PC-3 (cell line): ENCODE measurements at regions of chr11 and their contacts with region 1.

Region 1: DNA sequence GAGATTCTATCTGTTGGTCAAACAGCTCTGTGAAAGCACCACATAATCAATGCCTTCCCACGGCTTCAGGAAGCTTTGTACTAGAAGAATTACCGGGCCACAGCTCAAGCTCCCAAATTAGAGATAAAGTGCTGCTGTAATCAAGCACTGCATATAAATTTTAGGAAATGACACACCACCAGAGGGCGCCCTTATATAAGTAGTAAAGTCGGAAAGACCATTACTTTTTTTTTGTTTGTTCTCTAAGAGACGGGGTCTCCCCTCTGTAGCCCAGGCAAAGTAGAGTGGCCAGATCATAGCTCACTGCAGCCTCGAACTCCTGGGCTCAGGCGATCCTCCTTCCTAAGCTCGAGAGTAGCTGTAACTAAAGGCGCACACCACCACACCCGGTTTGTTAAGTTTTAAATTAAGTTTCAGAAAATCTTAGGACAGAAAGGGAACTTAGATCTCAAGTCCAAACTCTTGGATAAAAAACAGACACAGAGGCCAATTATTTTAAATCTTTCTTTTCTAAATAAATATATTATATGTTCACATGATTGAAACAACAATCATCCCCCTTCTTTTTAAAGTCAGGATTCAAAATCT is 32.6 kb downstream of the PRCP start:
- DNase-seq: peak; percentile 92
- ATAC-seq: peak; percentile 31
- H3K4me3 ChIP-seq: peak overlapping the region; percentile 40; the same call in 1 of the 2 replicates
- H3K27ac ChIP-seq: no peak overlapping the region
- H3K4me1 ChIP-seq: peaks cover 11% of the 10 kb centered on the region
- H3K27me3 ChIP-seq: no peaks in the 10 kb centered on the region
- CTCF ChIP-seq: peak; percentile 95

Region 2: GRCh38 chr11:82682003-82682751 is 185.4 kb before region 1 on chr11:
- CTCF ChIA-PET with region 1: no interaction called
- POLR2A ChIA-PET with region 1: no interaction called
- intact Hi-C with region 1: loop called (anchors 1 kb)
- DNase-seq: peak; percentile 92
- ATAC-seq: peak; percentile 89
- H3K4me3 ChIP-seq: peak overlapping the region; percentile 42; the same call in 1 of the 2 replicates
- H3K27ac ChIP-seq: peak overlapping the region; percentile 25; the same call in 1 of the 2 replicates
- H3K4me1 ChIP-seq: peaks cover 26% of the 10 kb centered on the region
- H3K27me3 ChIP-seq: peaks cover 12% of the 10 kb centered on the region; the same call in 1 of the 2 replicates
- CTCF ChIP-seq: peak; percentile 90

Region 3: GRCh38 chr11:82775736-82776346 is 91.7 kb before region 1 on chr11:
- CTCF ChIA-PET with region 1: no interaction called
- POLR2A ChIA-PET with region 1: no interaction called
- intact Hi-C with region 1: loop called (anchors 1 kb)
- DNase-seq: peak; percentile 89
- ATAC-seq: peak; percentile 96
- H3K4me3 ChIP-seq: no peak overlapping the region
- H3K27ac ChIP-seq: no peak overlapping the region
- H3K4me1 ChIP-seq: peaks cover 13% of the 10 kb centered on the region; the same call in 1 of the 2 replicates
- H3K27me3 ChIP-seq: no peaks in the 10 kb centered on the region
- CTCF ChIP-seq: peak; percentile 93

Region 4: DNA sequence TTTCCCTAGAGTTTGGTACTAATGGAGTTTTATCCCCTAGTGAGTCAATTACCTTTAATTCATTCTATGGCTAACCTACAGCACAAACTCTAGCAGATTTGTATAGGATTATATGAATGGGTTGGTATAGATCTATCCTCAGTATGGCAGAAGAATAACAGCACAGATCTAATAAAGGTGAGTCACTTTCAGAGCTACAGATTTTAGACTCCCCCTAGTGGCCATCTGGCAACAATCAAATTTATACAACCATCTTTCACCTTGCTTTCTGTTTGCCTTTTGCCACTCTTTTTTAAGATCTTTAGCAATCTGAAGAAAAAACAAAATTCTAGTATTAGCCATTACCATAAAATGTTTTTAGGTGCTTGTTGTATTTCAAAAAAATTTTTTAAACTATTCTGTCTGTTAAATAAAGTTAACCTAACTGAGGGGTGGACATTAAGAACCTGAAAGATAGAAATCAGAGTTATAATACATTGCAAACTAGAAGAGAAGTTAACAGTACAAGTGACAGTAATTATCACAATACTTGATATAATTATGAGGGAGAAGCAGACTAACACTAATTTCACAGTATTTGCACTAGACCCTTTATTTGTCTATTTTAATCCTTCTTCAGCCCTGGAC is 59.8 kb after region 1 on chr11:
- CTCF ChIA-PET with region 1: interaction called, 10 read pairs
- POLR2A ChIA-PET with region 1: no interaction called
- intact Hi-C with region 1: loop called (anchors 1 kb)
- DNase-seq: peak; percentile 80
- ATAC-seq: peak; percentile 89
- H3K4me3 ChIP-seq: no peak overlapping the region
- H3K27ac ChIP-seq: no peak overlapping the region
- H3K4me1 ChIP-seq: no peaks in the 10 kb centered on the region
- H3K27me3 ChIP-seq: no peaks in the 10 kb centered on the region
- CTCF ChIP-seq: peak; percentile 94